GM13976 (cell line): ENCODE measurements at regions of chr16 and their contacts with region 1.

Region 1: GRCh38 chr16:2474877-2475412 is at the start of gene TBC1D24:
- DNase-seq: peak; percentile 99
- CTCF ChIP-seq: no peak

Region 2: DNA sequence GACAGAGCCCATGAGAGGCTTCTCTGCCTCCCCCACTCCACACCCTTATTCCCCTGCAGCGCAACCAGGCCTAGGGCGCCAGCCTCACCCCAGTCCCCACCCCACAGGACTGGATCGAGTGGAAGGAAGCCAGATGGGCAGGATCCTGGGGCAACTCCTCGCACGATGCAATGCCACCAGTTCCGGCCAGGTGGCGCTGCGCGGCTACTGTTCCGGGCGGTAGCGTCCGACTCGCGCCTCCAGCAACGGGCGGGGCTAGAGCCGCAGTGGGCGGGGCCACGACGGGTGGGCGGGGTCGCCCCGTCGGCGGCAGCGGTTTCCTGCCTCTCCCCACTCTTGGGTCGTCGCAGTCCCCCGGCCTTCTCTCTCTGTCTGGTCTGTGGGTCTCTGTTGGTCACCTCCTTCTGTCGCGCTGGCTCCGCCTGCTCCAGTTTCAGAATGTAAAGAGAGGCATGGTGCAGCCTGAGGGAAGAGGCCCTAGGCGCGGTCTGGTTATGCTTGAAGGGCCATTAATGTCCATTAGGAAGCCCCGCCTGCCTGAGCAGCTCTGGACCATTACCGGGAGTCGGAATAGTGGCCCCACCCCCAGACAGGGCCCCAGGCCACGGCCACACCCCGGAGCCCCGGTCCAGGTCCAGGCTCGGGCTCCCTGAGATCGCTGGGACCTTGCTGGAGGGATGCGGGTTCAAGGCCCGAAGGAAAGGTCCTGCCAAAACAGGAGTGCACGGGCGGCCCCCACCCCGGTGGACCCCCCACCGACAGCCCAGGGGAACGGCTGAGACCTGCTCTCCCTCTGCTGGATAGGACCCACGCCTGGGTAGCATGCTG is 451.6 kb before region 1 on chr16:
- in situ Hi-C with region 1: loop called (anchors 25 kb)
- DNase-seq: peak; percentile 99
- CTCF ChIP-seq: peak; percentile 95

Region 3: DNA sequence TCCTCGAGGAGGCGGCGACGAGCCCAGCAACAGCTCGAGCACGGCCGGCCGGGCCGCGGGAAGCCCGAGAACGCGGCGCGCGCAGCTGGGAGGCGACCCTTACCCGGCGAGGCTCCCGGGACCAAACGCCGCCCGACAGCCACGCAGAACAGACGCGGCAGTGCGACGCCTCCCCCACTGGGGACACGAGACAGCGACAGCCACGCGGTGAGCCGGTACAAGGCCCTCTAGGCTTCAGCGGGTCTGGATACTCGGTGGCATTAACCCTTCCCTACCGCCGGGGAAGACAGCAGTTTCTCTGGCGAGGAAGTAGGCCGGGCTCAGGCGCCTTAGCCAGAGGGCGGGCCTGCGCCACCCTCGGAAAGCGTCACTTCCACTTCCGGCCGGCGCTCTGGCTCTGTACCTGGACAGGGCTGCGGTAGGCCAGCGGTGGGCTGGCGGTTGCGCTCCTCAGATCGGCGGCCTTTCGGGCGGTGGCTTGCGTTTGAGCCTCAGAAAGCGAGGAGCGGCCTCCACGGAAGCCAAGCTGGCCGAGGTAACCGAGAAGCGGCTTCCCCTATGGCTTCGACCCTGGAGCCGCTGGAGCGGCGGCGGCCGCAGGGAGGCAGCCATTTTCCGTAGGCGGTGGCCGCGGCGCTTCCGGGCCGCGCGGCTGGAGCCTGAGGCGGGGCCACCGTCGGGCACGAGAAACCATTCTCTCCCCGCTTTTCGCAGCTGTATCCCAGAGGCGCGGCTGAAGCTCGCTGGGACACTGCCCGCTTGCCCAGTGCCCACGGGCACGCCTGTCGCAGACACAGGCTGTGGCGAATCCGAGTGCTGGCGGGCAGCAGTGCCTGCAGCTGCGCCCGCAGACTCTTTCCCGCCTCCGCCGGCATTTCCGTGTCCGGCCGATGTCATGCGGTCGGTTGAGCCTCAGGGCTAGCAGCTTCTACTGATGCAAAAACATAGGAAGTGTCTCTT is 830.4 kb after region 1 on chr16 and contains the starts of genes TIGD7 and ZNF75A:
- in situ Hi-C with region 1: no loop called
- DNase-seq: peak; percentile 93
- CTCF ChIP-seq: no peak